ENCODE measurements at regions of chr7 and their contacts with region 1.

Region 1: DNA sequence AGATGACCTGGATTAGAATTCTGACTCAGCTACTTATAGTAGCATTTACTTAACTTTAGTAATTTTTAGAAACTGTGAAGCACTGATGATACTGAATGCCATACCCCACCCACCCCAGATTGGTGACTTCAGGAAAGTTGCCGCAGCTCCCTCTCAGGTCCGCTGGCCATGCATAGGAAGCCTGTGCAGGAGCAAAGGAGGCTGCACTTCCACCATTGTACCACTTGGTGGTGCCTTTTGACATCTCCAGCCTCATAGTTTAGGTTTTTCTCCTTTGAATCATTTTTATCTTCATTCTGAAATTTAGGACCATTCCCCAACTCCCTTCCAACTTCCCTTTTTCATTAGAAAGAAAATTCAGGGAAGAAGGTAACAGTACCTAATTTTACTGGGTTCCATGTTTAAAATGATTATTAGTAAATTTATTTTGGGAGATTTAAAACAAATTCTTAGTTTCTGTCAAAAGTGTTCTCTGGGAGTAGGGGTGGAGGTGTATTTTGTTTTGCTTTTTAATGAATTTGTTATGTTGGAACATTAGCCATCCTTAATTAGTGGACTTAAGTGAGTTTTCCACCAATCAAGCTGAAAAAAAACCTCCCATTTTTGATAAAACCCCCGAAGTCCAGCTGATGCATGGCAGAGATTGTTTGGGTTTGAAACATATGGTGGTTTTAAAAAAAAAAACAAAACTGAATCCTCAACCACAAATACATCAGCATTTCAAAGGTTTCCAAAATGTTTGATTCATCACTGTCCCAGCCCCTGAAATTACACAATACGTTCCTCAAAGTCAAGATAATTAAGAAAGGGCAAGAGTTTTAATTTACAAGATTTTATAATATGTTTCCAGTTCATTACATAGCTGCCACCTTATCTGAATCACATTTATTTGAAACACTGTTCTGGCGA is 109.6 kb downstream of the WNT2 start:
- DNase-seq: no peak

Region 2: GRCh38 chr7:117385340-117386109 is 172.3 kb after region 1 on chr7:
- intact Hi-C with region 1: loop called (anchors 10 kb)
- DNase-seq: no peak

Measured in cardiac septum (tissue), 1 donor.